Activated CD8-positive, alpha-beta T cell treated with anti-CD3 and anti-CD28 coated beads, Interleukin-2, amount 10 ng/mL, durations not matched to agents 7 days and 5 days (primary cell): ENCODE measurements at regions of chr11 and their contacts with region 1.

Region 1: DNA sequence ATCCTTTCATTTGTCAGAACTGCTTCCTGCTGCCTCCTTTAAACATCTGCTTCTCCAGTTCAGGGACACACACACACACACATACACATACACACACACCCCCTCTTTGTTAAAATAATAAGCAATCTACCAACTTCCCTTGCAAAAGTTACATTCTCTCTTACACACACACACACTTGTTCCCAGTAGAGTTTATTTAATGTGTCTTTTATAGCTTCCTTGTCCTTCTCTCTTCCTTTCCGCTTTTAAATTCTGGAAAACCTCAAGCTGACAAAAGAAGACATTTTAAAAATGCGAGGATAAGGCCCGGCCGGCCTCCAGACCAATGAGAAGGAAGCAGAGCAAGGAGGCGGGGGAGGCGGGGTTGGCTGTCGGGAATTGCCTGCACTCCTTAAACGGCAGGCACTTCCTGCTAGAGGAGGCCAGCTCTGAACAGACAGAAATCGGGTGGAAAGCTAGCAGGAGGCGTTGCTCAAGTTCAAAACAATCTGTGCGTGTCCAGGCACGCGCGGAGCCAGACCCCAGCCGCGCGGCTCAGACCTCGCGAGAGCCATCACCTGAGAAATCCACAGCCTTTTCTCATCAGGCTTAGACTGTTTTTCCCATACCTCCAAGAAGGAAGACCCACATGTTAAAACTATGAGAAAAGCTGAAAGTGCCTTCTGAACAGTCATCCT is 99.9 kb downstream of the MAML2 start:
- DNase-seq: peak; percentile 81
- ATAC-seq: peak; percentile 89
- H3K4me3 Mint-ChIP-seq: peak overlapping the region; percentile 75
- H3K27ac Mint-ChIP-seq: peak overlapping the region; percentile 87
- H3K4me1 Mint-ChIP-seq: peaks cover 55% of the 10 kb centered on the region
- H3K27me3 Mint-ChIP-seq: no peaks in the 10 kb centered on the region

Region 2: GRCh38 chr11:96254087-96254486 is 11.0 kb after region 1 on chr11:
- CTCF ChIA-PET with region 1: interaction called, 14 read pairs
- POLR2A ChIA-PET with region 1: interaction called, 4 read pairs
- DNase-seq: peak; percentile 37
- ATAC-seq: peak; percentile 10
- H3K4me3 Mint-ChIP-seq: peak overlapping the region; percentile 71
- H3K27ac Mint-ChIP-seq: peak overlapping the region; percentile 89
- H3K4me1 Mint-ChIP-seq: peaks cover 78% of the 10 kb centered on the region
- H3K27me3 Mint-ChIP-seq: no peaks in the 10 kb centered on the region